PC-3 (cell line): ENCODE measurements at regions of chr14 and their contacts with region 1.

Region 1: DNA sequence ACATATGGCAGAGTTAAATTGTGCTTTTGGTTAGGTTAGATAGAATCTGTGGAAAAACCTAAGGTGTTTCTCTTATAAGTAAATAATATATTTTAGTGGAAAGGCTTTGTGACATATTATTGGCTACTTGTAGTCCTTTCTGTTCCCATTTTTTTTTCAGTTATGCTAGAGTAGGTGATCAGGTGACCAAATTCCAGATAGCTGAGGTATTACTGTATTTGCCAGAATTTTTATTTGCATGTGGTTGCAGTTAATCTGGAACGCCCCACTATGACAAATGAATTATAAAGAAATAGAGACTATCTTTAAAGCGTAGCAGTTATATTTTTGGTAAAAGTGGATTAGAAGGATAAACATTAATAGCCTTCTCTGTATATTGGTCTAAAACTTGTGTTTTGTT is 52.0 kb downstream of the ARHGAP5 start:
- DNase-seq: peak; percentile 81
- ATAC-seq: peak; percentile 95
- H3K4me3 ChIP-seq: peak overlapping the region; percentile 11; the same call in 1 of the 2 replicates
- H3K27ac ChIP-seq: peak overlapping the region; percentile 64
- H3K4me1 ChIP-seq: peaks cover 21% of the 10 kb centered on the region
- H3K27me3 ChIP-seq: no peaks in the 10 kb centered on the region
- CTCF ChIP-seq: no peak

Region 2: GRCh38 chr14:32102152-32102787 is 26.9 kb before region 1 on chr14:
- CTCF ChIA-PET with region 1: no interaction called
- POLR2A ChIA-PET with region 1: no interaction called
- intact Hi-C with region 1: loop called (anchors 2 kb)
- DNase-seq: no peak
- ATAC-seq: peak; percentile 55; the same call in 1 of the 2 replicates
- H3K4me3 ChIP-seq: no peak overlapping the region
- H3K27ac ChIP-seq: no peak overlapping the region
- H3K4me1 ChIP-seq: no peaks in the 10 kb centered on the region
- H3K27me3 ChIP-seq: no peaks in the 10 kb centered on the region
- CTCF ChIP-seq: no peak